Activated CD4-positive, alpha-beta T cell treated with anti-CD3 and anti-CD28 coated beads, Interleukin-2, amount 10 ng/mL, durations not matched to agents 24 days and 14 days (primary cell): ENCODE measurements at regions of chr3 and their contacts with region 1.

Region 1: DNA sequence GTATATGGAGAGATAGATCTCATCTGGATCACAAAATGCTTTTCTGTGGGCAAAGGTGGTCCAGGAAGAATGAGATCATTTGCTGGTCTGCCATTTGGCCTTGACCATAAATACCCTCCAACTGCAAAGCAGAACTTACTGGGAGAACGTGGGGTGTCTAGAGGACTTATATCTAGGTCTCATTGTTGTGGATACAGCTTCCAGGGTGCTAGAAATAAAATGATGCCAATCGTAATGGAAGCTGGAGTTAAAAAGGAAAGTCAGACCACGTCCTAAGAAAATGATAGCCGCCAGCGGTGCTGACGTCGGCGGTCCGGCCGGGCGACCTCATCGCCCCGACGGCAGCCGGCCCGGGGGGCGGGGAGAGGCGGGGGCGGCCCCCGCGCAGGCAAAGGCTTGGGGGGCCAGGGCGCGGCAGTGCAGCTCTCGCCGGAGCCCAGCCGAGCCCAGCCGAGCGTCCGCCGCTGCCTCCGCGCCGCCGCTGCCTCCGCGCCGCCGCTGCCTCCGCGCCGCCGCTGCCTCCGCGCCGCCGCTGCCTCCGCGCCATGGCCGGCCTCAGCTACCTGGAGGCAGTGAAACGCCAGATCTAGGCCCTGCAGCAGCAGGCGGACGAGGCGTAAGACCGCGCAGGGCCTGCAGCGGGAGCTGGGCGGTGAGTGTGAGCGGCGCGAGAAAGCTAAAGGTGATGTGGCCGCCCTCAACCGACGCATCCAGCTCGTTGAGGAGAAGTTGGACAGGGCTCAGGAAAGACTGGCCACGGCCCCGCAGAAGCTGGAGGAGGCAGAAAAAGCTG is 89.5 kb downstream of the EOMES start:
- DNase-seq: peak; percentile 83
- H3K4me3 Mint-ChIP-seq: peak overlapping the region; percentile 85
- H3K27ac Mint-ChIP-seq: peak overlapping the region; percentile 84
- H3K4me1 Mint-ChIP-seq: peaks cover 30% of the 10 kb centered on the region
- H3K27me3 Mint-ChIP-seq: no peaks in the 10 kb centered on the region

Region 2: DNA sequence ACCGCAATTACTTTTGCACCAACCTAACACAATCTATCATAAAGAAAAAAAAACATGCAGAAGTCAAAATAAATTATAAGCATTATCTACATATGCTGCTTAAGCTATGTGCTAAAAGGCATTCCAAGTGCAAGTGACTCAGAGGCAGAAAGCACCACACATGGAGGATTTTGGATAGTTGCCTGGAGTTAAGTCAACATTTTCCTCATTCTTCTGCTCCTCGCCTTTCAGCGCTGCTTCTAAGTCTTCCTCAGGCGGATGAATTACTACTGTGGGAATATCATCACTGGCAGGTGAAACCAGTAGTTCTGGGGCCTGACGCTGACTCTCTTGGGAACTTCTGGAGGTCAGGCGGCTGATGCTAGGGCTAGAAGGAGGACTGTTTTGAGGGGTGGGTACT is 201.5 kb before region 1 on chr3:
- intact Hi-C with region 1: no loop called
- DNase-seq: no peak
- H3K4me3 Mint-ChIP-seq: no peak overlapping the region
- H3K27ac Mint-ChIP-seq: no peak overlapping the region
- H3K4me1 Mint-ChIP-seq: peaks cover 5% of the 10 kb centered on the region
- H3K27me3 Mint-ChIP-seq: no peaks in the 10 kb centered on the region

Region 3: DNA sequence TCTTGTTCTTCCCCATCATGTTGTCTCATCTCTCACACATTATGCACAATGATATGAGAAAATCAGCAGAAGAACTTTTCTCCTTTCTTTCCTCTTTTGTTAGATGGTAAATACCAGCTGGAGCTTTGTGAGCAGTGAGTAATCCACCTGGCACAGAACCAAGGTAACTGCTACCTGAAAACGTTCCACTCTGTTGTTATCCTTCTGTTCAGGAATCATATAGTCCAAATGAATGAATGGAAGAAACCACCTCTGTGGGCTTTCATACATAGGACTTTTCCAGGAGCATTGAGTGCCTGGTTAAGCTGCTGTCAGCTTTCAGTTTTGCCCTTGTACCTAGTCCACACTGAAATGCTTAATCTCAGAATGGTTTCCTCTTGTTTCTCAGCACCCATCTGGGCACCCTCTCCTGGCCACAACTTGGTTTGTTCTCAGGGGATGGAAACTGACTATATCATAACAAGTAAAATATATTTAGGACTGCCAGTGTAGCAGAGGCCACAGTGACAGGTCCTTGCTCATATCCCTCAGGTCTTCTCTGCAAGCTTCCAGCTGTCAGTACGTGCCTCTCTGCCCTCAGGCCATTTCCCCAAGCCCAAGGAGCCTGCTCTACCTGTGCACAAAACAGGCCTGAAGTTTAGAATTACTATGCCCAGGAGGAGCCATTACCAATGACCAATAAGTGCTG is 125.0 kb before region 1 on chr3:
- intact Hi-C with region 1: no loop called
- DNase-seq: no peak
- H3K4me3 Mint-ChIP-seq: no peak overlapping the region
- H3K27ac Mint-ChIP-seq: no peak overlapping the region
- H3K4me1 Mint-ChIP-seq: peaks cover 3% of the 10 kb centered on the region
- H3K27me3 Mint-ChIP-seq: no peaks in the 10 kb centered on the region

Region 4: GRCh38 chr3:27533718-27534573 is 98.7 kb before region 1 on chr3:
- intact Hi-C with region 1: loop called (anchors 2 kb)
- DNase-seq: peak; percentile 74
- H3K4me3 Mint-ChIP-seq: peak overlapping the region; percentile 61
- H3K27ac Mint-ChIP-seq: peak overlapping the region; percentile 84
- H3K4me1 Mint-ChIP-seq: peaks cover 21% of the 10 kb centered on the region
- H3K27me3 Mint-ChIP-seq: no peaks in the 10 kb centered on the region

Region 5: GRCh38 chr3:27590437-27591298 is 42.0 kb before region 1 on chr3:
- intact Hi-C with region 1: loop called (anchors 2 kb)
- DNase-seq: peak; percentile 65
- H3K4me3 Mint-ChIP-seq: peak overlapping the region; percentile 55
- H3K27ac Mint-ChIP-seq: peak overlapping the region; percentile 85
- H3K4me1 Mint-ChIP-seq: peaks cover 28% of the 10 kb centered on the region
- H3K27me3 Mint-ChIP-seq: no peaks in the 10 kb centered on the region

Region 6: DNA sequence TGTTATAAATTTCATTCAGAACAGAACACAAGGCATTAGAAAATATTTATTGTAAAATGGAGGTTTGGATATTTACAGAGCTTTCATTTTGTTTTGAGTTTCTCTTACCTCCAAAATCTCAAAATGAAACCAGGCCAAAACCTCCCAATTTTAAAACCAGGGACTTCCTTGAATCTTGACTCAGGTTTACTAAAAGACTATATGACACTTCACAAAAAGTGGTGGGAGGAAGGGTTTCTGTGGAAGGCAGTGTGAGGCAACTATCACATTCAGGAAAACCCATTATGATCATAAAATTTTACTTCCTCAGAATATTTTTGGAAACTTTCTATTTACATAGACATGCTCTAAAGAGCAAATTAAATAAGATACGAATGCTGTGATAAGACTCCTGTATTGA is 295.3 kb after region 1 on chr3:
- intact Hi-C with region 1: no loop called
- DNase-seq: no peak
- H3K4me3 Mint-ChIP-seq: peak overlapping the region; percentile 45
- H3K27ac Mint-ChIP-seq: peak overlapping the region; percentile 66
- H3K4me1 Mint-ChIP-seq: peaks cover 43% of the 10 kb centered on the region
- H3K27me3 Mint-ChIP-seq: no peaks in the 10 kb centered on the region

Region 7: DNA sequence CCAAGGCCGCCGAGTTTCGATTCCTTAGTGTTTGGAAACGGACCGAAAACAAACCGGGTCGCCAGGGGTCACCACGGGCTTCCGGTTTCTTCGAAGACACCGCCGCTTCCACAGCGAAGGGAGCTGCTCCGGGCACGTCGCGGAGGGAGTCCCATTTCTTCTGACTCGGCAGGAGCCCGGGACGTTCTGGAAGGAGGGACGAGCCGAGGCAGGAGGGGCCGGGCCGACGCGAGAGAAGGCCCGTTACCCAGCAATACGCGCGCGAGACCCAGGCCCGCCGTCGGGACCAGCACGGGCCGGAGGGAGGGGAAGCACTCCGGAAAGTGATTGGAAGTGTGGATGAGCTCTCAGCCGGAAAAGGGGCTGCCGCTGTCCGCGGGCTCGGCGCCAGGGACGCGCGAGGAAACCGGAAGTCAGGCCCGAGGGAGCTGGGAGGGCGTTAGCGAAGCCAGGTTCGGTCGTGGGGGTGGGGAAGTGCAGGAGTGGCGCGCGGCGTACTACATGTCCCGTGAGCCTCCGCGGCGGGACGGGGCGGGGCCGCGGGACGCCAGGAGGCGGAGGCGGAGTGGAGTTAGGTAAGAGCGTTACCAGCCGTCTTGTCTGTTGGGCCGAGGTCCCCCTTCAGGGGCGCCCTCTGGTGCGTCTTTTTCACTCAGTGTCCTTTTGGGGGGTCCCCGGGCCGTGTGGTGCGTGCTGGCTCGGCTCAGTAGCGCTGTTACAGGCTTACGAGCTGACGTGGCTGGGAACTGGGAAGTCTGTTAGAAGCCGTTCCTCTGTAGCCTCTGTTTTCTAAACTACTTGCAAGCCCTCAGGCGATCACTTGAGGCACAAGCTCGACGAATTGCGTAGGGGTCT is 716.2 kb after region 1 on chr3 and contains the starts of genes AZI2 and ZCWPW2:
- intact Hi-C with region 1: loop called (anchors 5 kb)
- DNase-seq: peak; percentile 98
- H3K4me3 Mint-ChIP-seq: peak within 1 kb of the TSS; percentile 98
- H3K27ac Mint-ChIP-seq: peak within 1 kb of the TSS; percentile 96
- H3K4me1 Mint-ChIP-seq: peaks cover 41% of the 10 kb centered on the region
- H3K27me3 Mint-ChIP-seq: no peaks in the 10 kb centered on the region
- total RNA-seq, gene AZI2: 35.6 and 38.7 TPM in 2 replicates
- total RNA-seq, gene ZCWPW2: 0.14 TPM in 1 of 2 replicates, not detected in the other